ENCODE measurements at regions of chr2 and their contacts with region 1.

Region 1: DNA sequence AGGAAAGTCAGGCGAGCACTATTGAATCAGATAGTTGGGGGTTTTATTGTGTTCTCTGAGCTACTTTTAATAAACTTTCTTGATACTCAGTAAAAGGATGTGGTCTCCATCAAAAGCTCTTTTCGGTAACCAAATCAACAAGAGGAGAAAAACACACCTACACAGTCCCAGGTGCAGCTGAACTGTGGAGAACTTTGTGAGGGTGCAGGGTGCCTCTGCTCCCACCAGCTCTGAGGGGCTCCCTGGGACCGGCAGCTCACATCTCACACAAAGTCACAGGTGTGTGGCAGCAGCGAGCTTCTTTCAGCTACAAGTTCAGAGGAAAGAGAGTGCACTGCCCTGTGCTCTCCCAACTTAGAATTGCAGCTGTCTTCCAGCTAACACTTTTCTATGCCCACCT is 650.4 kb downstream of the RNF144A start:
- DNase-seq: peak; percentile 82
- H3K4me3 Mint-ChIP-seq: peak overlapping the region; percentile 36
- H3K27ac Mint-ChIP-seq: peak overlapping the region; percentile 82
- H3K4me1 Mint-ChIP-seq: peaks cover 58% of the 10 kb centered on the region
- H3K27me3 Mint-ChIP-seq: no peaks in the 10 kb centered on the region

Region 2: DNA sequence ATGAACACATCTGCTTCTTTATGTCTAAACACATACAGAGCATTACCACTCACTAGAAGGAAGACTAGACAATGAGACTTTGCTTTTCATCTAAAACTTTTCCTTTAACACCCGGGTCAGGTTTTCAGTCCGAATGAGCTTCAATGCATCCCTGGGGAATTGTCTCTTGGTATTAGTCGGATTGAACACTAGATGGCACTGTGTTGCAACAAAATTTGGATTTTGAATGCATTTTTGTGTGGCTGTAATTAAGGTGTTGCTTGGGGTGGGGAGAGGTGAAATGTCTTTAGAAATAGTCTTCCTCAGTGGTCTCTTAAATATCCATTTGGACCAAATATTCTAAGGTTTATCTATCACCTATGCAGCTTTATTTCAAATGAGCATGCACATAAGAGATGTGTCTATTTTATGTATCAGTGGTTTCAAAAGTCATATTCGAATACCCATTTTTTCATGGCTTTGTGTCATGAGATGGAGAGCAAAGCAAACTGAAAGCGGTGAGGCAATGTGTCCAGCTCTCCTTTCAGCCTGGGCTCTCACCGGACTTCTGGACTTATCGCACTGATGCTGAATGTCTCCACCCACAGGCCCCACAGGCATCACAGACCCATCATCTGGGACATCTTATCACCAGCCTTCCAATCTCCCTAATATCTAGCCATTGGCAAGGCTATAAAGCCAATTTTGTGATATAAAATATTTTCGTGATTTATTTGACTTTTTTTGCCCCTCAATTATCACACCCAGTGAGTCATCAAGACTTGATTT is 140.2 kb before region 1 on chr2:
- CTCF ChIA-PET with region 1: interaction called, 9 read pairs
- intact Hi-C with region 1: loop called (anchors 1 kb)
- DNase-seq: no peak
- H3K4me3 Mint-ChIP-seq: no peak overlapping the region
- H3K27ac Mint-ChIP-seq: no peak overlapping the region
- H3K4me1 Mint-ChIP-seq: peaks cover 31% of the 10 kb centered on the region
- H3K27me3 Mint-ChIP-seq: peaks cover 3% of the 10 kb centered on the region

Region 3: DNA sequence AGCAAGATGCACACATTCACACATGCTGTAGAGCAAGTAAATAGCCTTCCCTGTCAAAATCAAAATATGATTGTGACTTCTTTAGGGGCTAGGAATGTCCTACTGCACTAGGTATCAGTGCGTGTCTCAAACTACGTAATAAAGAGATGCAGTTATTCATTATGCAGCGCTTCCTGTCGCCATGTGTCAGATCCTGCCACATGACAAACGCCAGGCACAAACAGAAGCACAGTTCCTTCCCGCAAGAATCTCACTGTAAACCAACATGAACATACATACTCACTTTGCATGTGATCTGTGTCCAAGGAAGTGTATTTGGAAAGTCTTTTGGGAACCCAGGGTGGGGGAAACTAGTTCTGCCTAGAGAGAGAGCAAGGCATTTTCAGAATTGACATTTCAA is 50.6 kb before region 1 on chr2:
- CTCF ChIA-PET with region 1: interaction called, 3 read pairs
- intact Hi-C with region 1: loop called (anchors 1 kb)
- DNase-seq: peak; percentile 61
- H3K4me3 Mint-ChIP-seq: peak overlapping the region; percentile 31
- H3K27ac Mint-ChIP-seq: peak overlapping the region; percentile 77
- H3K4me1 Mint-ChIP-seq: peaks cover 37% of the 10 kb centered on the region
- H3K27me3 Mint-ChIP-seq: no peaks in the 10 kb centered on the region

Region 4: DNA sequence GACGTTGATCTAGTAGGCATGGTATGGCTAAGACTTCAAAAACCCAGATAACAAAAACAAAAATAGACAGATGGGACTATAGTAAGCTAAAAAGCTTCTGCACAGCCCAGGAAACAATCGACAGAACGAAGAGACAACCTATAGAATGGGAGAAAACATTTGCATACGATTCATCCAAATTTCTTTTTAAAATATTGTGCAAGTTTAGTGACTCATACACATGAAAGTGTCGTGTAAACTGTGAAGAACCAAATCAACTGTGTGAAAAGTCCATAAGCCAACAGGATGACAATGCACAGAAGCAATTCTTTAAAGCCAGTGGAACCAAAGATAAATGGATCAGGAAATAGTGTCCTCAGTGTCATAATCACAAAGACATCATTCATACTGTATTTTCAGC is 20.6 kb after region 1 on chr2:
- CTCF ChIA-PET with region 1: interaction called, 6 read pairs
- intact Hi-C with region 1: loop called (anchors 1 kb)
- DNase-seq: no peak
- H3K4me3 Mint-ChIP-seq: no peak overlapping the region
- H3K27ac Mint-ChIP-seq: peak overlapping the region; percentile 6
- H3K4me1 Mint-ChIP-seq: peaks cover 27% of the 10 kb centered on the region
- H3K27me3 Mint-ChIP-seq: no peaks in the 10 kb centered on the region

Region 5: GRCh38 chr2:7758073-7758759 is 190.6 kb after region 1 on chr2:
- CTCF ChIA-PET with region 1: no interaction called
- intact Hi-C with region 1: loop called (anchors 2 kb)
- DNase-seq: no peak
- H3K4me3 Mint-ChIP-seq: no peak overlapping the region
- H3K27ac Mint-ChIP-seq: no peak overlapping the region
- H3K4me1 Mint-ChIP-seq: peaks cover 12% of the 10 kb centered on the region
- H3K27me3 Mint-ChIP-seq: peaks cover 12% of the 10 kb centered on the region

Region 6: GRCh38 chr2:8154936-8155335 is 587.3 kb after region 1 on chr2:
- CTCF ChIA-PET with region 1: no interaction called
- intact Hi-C with region 1: loop called (anchors 1 kb)
- DNase-seq: peak; percentile 68
- H3K4me3 Mint-ChIP-seq: no peak overlapping the region
- H3K27ac Mint-ChIP-seq: peak overlapping the region; percentile 78
- H3K4me1 Mint-ChIP-seq: peaks cover 16% of the 10 kb centered on the region
- H3K27me3 Mint-ChIP-seq: no peaks in the 10 kb centered on the region

Region 7: GRCh38 chr2:8312861-8313830 is 745.5 kb after region 1 on chr2:
- CTCF ChIA-PET with region 1: no interaction called
- intact Hi-C with region 1: no loop called
- DNase-seq: no peak
- H3K4me3 Mint-ChIP-seq: no peak overlapping the region
- H3K27ac Mint-ChIP-seq: no peak overlapping the region
- H3K4me1 Mint-ChIP-seq: peaks cover 20% of the 10 kb centered on the region
- H3K27me3 Mint-ChIP-seq: peaks cover 2% of the 10 kb centered on the region